Left ventricle myocardium superior (tissue), 1 donor: ENCODE measurements at regions of chr18 and their contacts with region 1.

Region 1: DNA sequence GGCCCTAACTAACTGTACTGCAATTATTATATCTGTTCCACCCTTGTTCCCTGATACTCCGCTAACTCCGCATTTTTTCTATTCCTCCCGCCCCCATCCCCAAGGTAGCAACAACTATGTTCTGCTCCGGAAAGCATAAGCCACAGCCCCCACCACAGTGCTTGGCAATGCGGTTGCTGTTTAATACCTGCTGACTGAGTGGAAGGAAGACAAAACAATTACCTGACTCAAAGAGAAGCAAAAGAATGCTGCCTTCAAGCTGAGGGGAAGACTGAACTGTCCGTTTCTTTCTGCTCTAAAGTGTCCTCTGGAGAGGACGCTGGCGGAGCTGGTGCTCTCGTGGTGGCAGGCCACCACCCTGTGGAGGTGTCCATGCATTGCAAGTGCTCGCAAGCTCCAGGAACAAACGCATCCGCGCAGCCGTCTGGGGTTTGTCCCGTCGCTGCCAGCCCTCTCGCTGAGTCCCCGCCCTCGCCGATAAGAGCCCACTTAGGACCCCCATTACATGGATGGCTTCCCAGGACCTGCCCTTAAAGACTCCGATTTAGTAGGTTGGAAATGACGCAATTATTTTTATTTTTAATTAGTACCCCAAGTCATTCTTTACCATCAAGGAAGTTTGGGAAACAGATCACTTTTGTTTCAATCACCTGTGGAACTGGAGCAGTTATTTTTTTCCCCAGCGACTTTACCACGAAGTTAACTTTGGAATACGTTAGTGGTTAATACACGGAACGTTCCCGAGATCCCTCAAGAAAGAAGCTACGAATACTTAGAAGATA is 1.6 kb upstream of the MYL12A start:
- DNase-seq: peak; percentile 92
- ATAC-seq: peak; percentile 76

Region 2: DNA sequence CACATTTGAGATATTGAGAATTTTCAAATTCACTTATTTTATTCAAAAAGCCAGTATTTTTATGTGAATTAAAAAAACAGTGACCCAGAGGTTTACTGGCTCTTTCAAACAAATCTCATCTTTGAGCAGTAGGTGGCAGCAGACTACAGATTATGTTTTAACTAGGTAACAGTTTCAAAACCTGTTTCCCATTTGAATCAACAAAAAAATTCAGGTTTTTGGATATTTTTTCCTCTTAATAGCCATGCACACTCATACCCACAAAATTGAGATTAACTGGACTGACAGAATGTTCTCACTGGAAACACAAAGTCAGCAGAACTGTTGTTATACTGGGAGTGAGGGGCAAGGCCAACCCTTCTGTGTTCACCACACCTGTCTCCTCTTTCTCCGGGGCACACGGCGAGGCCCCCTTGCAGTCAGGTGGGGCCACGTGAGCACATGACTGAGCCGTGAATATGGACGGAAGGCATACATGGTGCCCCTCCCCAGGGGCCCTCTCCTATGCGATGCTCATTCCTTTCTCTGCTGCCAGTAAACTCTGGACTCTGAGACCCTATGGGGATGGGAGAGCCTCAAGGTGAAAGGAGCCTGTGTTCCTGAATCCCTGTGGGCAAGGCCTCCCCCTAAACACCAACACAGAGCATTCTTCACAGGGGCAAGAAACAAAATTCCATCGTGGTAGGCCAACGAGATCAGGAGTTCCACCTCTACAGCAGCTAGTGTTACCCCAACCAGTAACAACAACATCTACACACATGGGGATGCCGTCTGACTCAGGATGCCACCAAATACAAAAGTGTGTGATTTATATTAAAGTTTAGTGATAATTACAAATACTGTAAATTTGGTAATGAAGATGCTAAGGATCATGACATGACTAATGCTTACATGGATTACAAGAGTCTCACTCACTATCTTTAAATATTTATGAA is 313.5 kb before region 1 on chr18:
- intact Hi-C with region 1: loop called (anchors 10 kb)
- DNase-seq: no peak
- ATAC-seq: peak; percentile 52

Region 3: GRCh38 chr18:3179430-3180089 is 66.5 kb before region 1 on chr18:
- intact Hi-C with region 1: loop called (anchors 10 kb)
- DNase-seq: no peak
- ATAC-seq: peak; percentile 8